ENCODE measurements at regions of chr13 and their contacts with region 1.

Region 1: DNA sequence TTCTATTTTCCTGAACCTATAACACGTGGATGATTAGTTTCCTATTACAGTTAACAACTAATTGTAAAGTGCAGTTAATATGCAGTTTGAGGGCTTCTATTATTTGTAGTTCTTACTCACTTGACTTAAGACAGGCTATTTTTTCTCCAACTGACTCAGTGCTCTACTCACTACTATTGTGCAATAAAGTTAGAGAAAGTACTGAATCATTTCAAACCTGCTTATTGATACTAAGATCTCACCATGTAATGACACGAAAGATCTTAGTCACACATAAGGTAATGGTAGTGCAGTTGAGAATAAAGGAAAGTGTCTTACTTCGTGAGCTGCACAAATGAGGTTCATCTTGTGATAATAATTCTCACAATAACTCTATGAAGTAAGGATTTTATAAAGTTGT is 22.8 kb upstream of the ITM2B start:
- DNase-seq: no peak
- H3K4me3 Mint-ChIP-seq: no peak overlapping the region
- H3K27ac Mint-ChIP-seq: no peak overlapping the region
- H3K4me1 Mint-ChIP-seq: peaks cover 26% of the 10 kb centered on the region
- H3K27me3 Mint-ChIP-seq: no peaks in the 10 kb centered on the region

Region 2: GRCh38 chr13:48126944-48127830 is 83.0 kb before region 1 on chr13:
- CTCF ChIA-PET with region 1: no interaction called
- intact Hi-C with region 1: loop called (anchors 2 kb)
- DNase-seq: peak; percentile 46
- H3K4me3 Mint-ChIP-seq: peak overlapping the region; percentile 0
- H3K27ac Mint-ChIP-seq: peak overlapping the region; percentile 44
- H3K4me1 Mint-ChIP-seq: peaks cover 29% of the 10 kb centered on the region
- H3K27me3 Mint-ChIP-seq: no peaks in the 10 kb centered on the region

Region 3: GRCh38 chr13:48186722-48187121 is 23.5 kb before region 1 on chr13:
- CTCF ChIA-PET with region 1: interaction called, 4 read pairs
- intact Hi-C with region 1: loop called (anchors 1 kb)
- DNase-seq: no peak
- H3K4me3 Mint-ChIP-seq: no peak overlapping the region
- H3K27ac Mint-ChIP-seq: no peak overlapping the region
- H3K4me1 Mint-ChIP-seq: peaks cover 58% of the 10 kb centered on the region
- H3K27me3 Mint-ChIP-seq: no peaks in the 10 kb centered on the region

Region 4: GRCh38 chr13:48222358-48223301 is 12.5 kb after region 1 on chr13:
- CTCF ChIA-PET with region 1: interaction called, 6 read pairs
- intact Hi-C with region 1: loop called (anchors 1 kb)
- DNase-seq: no peak
- H3K4me3 Mint-ChIP-seq: no peak overlapping the region
- H3K27ac Mint-ChIP-seq: peak overlapping the region; percentile 5
- H3K4me1 Mint-ChIP-seq: peaks cover 55% of the 10 kb centered on the region
- H3K27me3 Mint-ChIP-seq: no peaks in the 10 kb centered on the region

Region 5: DNA sequence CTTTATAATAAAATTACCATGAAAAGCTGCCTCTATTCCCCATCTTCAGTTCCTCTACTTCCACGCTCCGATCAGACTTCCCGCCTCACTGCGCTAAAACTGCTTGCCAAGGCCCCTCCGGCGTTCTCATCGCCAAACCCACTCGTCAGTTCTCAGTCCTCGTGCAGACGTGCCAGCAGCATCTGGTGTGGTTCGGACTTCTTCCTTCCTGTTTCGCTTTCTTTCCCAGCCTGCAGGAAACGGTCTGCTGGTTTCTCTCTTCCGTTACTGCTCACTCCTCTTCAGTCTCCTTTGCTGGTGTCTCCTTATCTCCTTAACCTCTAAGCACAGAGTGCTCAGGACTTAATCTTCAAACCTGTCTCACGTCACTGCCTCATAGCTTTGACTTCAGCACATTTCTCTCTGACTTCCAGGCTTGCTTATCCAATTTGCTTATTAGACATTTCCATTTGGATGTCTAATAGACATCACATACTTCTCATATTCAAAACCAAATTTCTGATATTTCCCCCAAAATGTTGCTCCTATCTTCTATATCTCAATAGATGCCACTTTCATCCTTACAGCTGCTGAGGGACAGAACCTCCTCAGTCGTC is 282.4 kb after region 1 on chr13:
- CTCF ChIA-PET with region 1: no interaction called
- intact Hi-C with region 1: loop called (anchors 2 kb)
- DNase-seq: peak; percentile 74
- H3K4me3 Mint-ChIP-seq: no peak overlapping the region
- H3K27ac Mint-ChIP-seq: no peak overlapping the region
- H3K4me1 Mint-ChIP-seq: peaks cover 39% of the 10 kb centered on the region
- H3K27me3 Mint-ChIP-seq: no peaks in the 10 kb centered on the region

Region 6: GRCh38 chr13:48562296-48563066 is 352.3 kb after region 1 on chr13:
- CTCF ChIA-PET with region 1: no interaction called
- intact Hi-C with region 1: loop called (anchors 1 kb)
- DNase-seq: peak; percentile 76
- H3K4me3 Mint-ChIP-seq: no peak overlapping the region
- H3K27ac Mint-ChIP-seq: no peak overlapping the region
- H3K4me1 Mint-ChIP-seq: peaks cover 23% of the 10 kb centered on the region
- H3K27me3 Mint-ChIP-seq: peaks cover 47% of the 10 kb centered on the region